Activated CD4-positive, alpha-beta memory T cell treated with anti-CD3 and anti-CD28 coated beads for 36 hours (primary cell): ENCODE measurements at regions of chr11 and their contacts with region 1.

Region 1: GRCh38 chr11:67583247-67584204 is at the start of gene GSTP1:
- DNase-seq: peak; percentile 85
- H3K4me3 Mint-ChIP-seq: peak within 1 kb of the TSS; percentile 95
- H3K27ac Mint-ChIP-seq: peak within 1 kb of the TSS; percentile 91
- H3K4me1 Mint-ChIP-seq: peaks cover 52% of the 10 kb centered on the region
- H3K27me3 Mint-ChIP-seq: peaks cover under 1% of the 10 kb centered on the region
- total RNA-seq, gene GSTP1: 361 to 362 TPM

Region 2: DNA sequence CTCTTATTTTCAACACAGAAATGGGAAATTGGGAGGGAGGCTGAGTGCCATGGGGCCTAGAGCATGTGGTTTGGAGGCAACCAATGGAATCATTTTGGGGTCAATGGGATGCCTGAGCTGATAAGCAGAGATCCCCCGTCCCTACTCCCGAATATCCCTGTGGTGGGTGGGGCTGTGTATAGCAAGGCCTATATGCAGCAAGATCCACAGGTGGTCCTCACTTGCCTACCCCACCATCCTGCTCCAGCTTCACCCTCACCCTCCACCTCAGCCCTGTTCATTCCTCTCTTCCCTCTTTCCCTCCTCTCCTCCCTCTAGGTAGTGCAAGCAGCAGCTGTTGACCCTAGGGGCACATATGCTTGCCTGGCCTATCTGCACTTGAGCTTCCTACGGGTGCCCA is 260.8 kb before region 1 on chr11:
- CTCF ChIA-PET with region 1: no interaction called
- POLR2A ChIA-PET with region 1: no interaction called
- intact Hi-C with region 1: no loop called
- DNase-seq: no peak
- H3K4me3 Mint-ChIP-seq: no peak overlapping the region
- H3K27ac Mint-ChIP-seq: no peak overlapping the region
- H3K4me1 Mint-ChIP-seq: peaks cover 9% of the 10 kb centered on the region
- H3K27me3 Mint-ChIP-seq: no peaks in the 10 kb centered on the region

Region 3: GRCh38 chr11:67606492-67607201 is 23.1 kb after region 1 on chr11 and contains the start of gene NDUFV1:
- CTCF ChIA-PET with region 1: no interaction called
- POLR2A ChIA-PET with region 1: no interaction called
- intact Hi-C with region 1: loop called (anchors 2 kb)
- DNase-seq: peak; percentile 98
- H3K4me3 Mint-ChIP-seq: peak within 1 kb of the TSS; percentile 85
- H3K27ac Mint-ChIP-seq: peak within 1 kb of the TSS; percentile 76
- H3K4me1 Mint-ChIP-seq: peaks cover 13% of the 10 kb centered on the region
- H3K27me3 Mint-ChIP-seq: peaks cover 6% of the 10 kb centered on the region
- total RNA-seq, gene NDUFV1: 279 to 287 TPM